Activated naive CD4-positive, alpha-beta T cell treated with anti-CD3 and anti-CD28 coated beads for 36 hours (primary cell): ENCODE measurements at regions of chr21 and their contacts with region 1.

Region 1: DNA sequence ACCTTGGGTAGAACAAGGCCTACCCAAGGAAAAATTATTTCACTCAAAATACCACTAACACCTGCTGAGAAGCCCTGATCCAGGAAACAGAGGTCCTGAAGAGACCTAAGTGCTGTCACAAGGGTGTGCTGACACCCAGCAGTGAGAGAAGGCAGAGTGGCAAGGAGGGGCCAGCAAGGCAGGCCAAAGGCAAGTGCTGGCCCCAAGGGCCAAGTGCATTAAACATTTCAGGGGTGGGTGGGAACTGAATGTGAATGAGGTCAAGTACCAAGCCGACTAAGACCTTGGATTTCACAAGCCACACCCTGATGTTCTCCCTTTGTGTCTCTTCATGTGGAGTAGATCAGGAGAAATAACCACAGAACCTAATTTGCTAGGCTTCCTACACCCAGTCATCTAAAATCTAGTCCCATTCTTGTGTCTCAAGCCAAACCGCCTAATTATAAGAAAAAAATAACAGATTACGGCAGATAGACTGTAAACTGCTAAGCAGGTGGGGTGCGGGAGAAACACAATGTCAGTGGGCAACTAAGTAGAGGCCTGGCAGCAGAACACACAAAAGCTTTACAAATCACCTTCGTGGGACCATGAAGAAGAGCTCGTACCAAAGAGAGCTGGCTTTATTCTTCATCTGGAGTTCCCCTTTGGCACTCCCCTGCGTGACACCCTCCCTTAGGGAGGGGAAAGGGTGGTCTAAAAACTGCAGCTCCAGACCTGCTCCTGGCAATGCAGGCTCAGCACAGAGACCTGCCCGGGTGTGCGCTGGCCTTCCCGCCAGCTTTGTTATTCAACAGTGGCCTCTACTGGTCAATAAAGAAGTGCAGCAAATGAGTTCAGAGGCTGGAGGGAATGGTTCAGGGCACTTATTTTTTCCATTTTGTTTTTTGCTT is 8.7 kb downstream of the UBE2G2 start:
- DNase-seq: peak; percentile 62
- H3K4me3 Mint-ChIP-seq: no peak overlapping the region
- H3K27ac Mint-ChIP-seq: peak overlapping the region; percentile 19
- H3K4me1 Mint-ChIP-seq: peaks cover 65% of the 10 kb centered on the region
- H3K27me3 Mint-ChIP-seq: no peaks in the 10 kb centered on the region

Region 2: GRCh38 chr21:44510508-44511210 is 282.3 kb before region 1 on chr21:
- CTCF ChIA-PET with region 1: interaction called, 27 read pairs
- intact Hi-C with region 1: loop called (anchors 1 kb)
- DNase-seq: peak; percentile 81
- H3K4me3 Mint-ChIP-seq: no peak overlapping the region
- H3K27ac Mint-ChIP-seq: no peak overlapping the region
- H3K4me1 Mint-ChIP-seq: peaks cover 5% of the 10 kb centered on the region
- H3K27me3 Mint-ChIP-seq: no peaks in the 10 kb centered on the region

Region 3: GRCh38 chr21:44742418-44743153 is 50.4 kb before region 1 on chr21:
- CTCF ChIA-PET with region 1: interaction called, 9 read pairs
- intact Hi-C with region 1: loop called (anchors 1 kb)
- DNase-seq: peak; percentile 18
- H3K4me3 Mint-ChIP-seq: no peak overlapping the region
- H3K27ac Mint-ChIP-seq: no peak overlapping the region
- H3K4me1 Mint-ChIP-seq: peaks cover 4% of the 10 kb centered on the region
- H3K27me3 Mint-ChIP-seq: no peaks in the 10 kb centered on the region

Region 4: DNA sequence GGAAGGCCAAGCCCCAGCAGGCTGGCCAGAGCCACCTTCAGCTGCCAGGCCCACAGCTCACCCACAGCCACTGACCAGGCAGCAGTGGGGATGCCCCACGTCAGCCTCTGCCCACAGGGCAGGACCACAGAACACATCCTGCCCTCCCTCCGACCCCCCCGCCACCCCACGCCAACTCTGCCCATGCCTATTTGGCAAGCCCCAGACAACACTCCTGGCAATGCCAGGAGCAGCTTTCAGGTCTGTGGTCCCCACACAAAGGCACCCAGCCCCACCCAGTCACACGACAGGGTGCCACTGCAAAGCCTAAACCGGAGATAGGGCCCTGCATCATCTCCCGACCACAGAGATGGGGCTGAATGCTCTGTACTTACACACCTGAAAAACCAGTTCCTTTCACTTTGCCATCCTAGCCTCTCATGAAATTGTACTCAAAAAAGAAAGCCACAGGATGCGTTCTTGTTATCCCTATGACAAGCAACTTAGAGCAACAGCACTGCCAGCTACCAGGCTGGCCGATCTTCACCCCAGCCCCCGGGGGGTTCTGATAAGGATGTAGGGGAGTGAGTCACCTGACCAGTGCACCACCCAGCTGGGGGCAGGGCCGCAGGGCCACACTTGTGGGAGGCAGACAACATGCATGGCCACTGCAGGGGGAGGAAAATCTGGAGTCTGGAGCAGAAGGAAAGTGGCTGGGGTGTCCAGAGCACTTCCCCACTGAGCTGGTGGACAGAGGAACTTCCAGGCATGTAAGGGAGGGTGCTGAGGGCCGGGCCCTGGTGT is 27.5 kb before region 1 on chr21:
- CTCF ChIA-PET with region 1: interaction called, 10 read pairs
- intact Hi-C with region 1: no loop called
- DNase-seq: peak; percentile 27
- H3K4me3 Mint-ChIP-seq: no peak overlapping the region
- H3K27ac Mint-ChIP-seq: peak overlapping the region; percentile 38
- H3K4me1 Mint-ChIP-seq: peaks cover 11% of the 10 kb centered on the region
- H3K27me3 Mint-ChIP-seq: no peaks in the 10 kb centered on the region

Region 5: DNA sequence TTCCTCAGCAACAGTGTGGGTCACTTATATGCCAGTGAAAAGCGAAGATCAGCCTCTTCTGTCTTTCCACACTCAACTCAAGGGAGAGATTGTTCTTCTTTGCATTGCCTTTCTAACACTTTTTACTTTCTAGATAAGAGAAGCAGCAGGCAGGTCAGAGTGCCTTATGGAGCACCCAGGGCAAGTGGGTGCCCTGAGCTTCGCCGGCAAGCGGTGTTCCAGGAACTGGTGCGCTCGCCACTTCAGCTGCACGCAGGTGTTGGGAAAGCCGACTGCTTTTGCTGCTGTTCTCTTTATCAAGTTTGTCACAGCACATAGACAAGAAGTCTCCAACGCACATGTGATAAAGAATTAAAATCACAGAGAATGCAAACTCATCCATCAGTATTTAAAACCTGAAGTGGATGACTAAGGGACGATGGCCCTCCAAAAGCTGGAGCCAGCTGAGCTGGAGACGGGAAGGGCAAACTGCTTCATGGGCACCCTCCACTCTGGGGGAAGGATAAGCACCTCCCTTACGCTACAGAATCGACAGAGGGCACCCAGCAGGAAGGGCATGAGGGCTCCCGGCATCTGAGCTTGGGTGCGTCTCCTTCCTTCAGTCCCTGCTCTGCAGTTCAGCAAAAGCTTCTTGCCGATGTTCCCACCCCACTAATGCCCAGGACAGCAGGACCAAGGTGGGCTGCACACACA is 12.0 kb before region 1 on chr21:
- CTCF ChIA-PET with region 1: interaction called, 20 read pairs
- intact Hi-C with region 1: no loop called
- DNase-seq: no peak
- H3K4me3 Mint-ChIP-seq: no peak overlapping the region
- H3K27ac Mint-ChIP-seq: no peak overlapping the region
- H3K4me1 Mint-ChIP-seq: peaks cover 18% of the 10 kb centered on the region
- H3K27me3 Mint-ChIP-seq: no peaks in the 10 kb centered on the region

Region 6: DNA sequence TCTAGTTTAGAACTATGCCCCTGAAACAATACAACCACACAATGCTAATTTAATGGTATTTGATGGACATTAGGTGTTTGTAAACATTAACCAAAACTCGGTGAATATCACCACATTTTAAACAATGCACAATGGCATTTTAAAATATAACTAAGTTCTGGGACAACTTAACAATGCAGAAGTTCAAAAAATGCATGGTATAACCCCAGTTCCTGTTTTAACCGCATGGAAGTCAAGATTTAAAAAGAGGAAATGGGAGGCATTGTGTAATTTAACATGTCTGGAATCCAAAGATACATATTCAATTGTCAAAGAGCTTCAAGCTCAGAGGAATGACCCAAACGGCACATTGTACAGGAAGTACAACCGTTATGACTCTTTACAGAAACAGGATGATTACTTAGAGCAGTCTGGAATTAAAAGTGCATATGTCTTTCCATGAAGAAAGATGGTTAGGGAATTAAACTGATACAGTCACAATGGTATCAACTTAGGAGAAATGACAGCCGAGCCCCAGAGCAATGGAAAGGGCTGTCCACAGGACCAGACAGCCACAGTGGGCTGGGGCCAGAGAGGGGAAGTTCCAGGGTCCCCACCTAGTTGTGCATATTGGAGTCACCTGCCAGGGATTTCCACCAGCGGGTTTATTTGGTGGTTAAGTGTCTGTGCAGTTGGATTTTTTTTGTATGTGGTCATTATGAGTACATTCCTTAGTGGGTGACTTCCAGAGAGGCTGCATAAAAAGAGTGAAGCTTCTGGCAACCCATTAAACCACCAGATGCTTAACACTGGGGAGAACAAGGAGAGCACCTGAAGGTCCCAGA is 88.0 kb after region 1 on chr21:
- CTCF ChIA-PET with region 1: interaction called, 13 read pairs
- intact Hi-C with region 1: no loop called
- DNase-seq: peak; percentile 55
- H3K4me3 Mint-ChIP-seq: no peak overlapping the region
- H3K27ac Mint-ChIP-seq: peak overlapping the region; percentile 69
- H3K4me1 Mint-ChIP-seq: peaks cover 26% of the 10 kb centered on the region
- H3K27me3 Mint-ChIP-seq: no peaks in the 10 kb centered on the region